Activated CD8-positive, alpha-beta T cell treated with anti-CD3 and anti-CD28 coated beads for 36 hours (primary cell): ENCODE measurements at regions of chr12 and their contacts with region 1.

Region 1: DNA sequence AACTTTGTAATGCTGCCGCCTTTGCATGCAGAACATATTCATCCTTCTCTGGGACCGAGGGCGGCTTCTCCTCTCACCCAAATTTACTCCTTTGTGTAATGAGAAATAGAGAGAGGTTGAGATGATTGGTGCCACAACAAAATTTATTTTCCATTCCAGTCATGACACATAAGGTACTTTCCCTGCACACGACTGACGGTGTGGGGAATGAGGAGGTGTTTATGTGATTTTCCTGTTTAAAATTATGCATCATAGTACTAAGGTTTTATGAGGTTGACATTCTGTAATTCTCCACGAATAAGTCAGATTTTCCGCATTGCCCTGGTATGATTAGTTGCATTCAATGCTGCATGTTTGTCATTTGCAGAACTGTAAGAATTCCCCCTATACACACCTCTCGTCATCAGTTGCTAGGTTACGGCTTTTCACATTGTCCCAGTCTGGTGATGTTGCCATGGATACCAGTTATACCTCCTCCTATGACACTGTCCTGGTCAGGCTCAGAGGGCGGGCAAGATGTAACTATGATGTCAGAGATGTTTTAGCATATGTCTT is 23.1 kb downstream of the BICDL1 start:
- DNase-seq: peak; percentile 92
- ATAC-seq: peak; percentile 74
- H3K4me3 Mint-ChIP-seq: peak overlapping the region; percentile 72
- H3K27ac Mint-ChIP-seq: peak overlapping the region; percentile 98
- H3K4me1 Mint-ChIP-seq: peaks cover 86% of the 10 kb centered on the region
- H3K27me3 Mint-ChIP-seq: no peaks in the 10 kb centered on the region
- CTCF ChIP-seq: no peak

Region 2: DNA sequence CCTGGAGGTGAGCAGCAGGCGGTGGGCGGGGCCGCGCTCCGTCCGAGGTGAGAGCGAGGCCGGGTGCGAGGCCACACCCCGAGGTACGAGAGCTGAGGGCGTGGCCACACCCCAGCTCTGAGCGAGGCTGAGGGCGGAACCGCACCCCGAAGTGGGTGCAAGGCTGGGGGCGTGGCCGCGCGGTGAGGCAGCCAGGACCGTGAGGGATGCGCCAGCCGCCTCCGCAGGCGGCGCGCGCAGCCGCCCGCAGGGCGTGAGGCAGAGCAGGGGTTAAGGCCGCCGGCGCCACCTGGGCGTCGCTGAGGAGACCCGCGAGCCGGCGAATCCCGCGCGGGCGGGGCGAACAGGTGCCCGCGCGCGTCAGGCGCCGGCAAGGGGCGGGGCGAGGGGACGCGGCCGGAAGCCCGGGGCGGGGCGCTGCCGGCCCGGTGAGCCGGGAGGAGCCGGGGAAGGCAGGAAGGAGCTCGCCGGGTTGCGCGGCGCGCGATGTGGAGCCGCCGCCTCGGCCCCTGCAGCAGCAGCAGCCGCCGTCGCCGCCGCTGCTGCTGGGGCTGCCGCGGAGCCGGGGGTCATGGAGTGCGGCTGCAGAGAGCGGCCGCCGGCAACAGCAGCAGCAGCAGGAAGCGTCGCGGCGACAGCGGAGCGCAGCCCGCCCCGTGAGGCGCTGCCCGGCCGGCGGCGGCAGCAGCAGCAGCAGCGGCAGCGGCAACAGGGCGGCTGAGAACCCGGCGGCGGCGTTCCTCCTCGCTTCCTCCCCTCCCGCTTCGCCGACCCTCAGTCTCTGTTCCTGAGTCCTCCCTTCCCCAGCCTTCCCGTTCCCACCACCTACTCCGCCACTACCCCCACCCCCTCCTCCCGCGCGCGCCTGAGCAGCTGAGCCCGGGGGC is 23.1 kb before region 1 on chr12 and contains the start of gene BICDL1:
- CTCF ChIA-PET with region 1: interaction called, 25 read pairs
- POLR2A ChIA-PET with region 1: interaction called, 131 read pairs
- intact Hi-C with region 1: loop called (anchors 2 kb)
- DNase-seq: peak; percentile 98
- ATAC-seq: peak; percentile 89
- H3K4me3 Mint-ChIP-seq: peak within 1 kb of the TSS; percentile 89
- H3K27ac Mint-ChIP-seq: peak within 1 kb of the TSS; percentile 90
- H3K4me1 Mint-ChIP-seq: peaks cover 40% of the 10 kb centered on the region
- H3K27me3 Mint-ChIP-seq: no peaks in the 10 kb centered on the region
- CTCF ChIP-seq: no peak
- total RNA-seq, gene BICDL1: 103 to 107 TPM

Region 3: GRCh38 chr12:119998471-119999245 is 13.5 kb before region 1 on chr12:
- CTCF ChIA-PET with region 1: interaction called, 12 read pairs
- POLR2A ChIA-PET with region 1: interaction called, 131 read pairs
- intact Hi-C with region 1: no loop called
- DNase-seq: no peak
- ATAC-seq: peak; percentile 62
- H3K4me3 Mint-ChIP-seq: no peak overlapping the region
- H3K27ac Mint-ChIP-seq: peak overlapping the region; percentile 43
- H3K4me1 Mint-ChIP-seq: peaks cover 63% of the 10 kb centered on the region
- H3K27me3 Mint-ChIP-seq: no peaks in the 10 kb centered on the region
- CTCF ChIP-seq: no peak

Region 4: DNA sequence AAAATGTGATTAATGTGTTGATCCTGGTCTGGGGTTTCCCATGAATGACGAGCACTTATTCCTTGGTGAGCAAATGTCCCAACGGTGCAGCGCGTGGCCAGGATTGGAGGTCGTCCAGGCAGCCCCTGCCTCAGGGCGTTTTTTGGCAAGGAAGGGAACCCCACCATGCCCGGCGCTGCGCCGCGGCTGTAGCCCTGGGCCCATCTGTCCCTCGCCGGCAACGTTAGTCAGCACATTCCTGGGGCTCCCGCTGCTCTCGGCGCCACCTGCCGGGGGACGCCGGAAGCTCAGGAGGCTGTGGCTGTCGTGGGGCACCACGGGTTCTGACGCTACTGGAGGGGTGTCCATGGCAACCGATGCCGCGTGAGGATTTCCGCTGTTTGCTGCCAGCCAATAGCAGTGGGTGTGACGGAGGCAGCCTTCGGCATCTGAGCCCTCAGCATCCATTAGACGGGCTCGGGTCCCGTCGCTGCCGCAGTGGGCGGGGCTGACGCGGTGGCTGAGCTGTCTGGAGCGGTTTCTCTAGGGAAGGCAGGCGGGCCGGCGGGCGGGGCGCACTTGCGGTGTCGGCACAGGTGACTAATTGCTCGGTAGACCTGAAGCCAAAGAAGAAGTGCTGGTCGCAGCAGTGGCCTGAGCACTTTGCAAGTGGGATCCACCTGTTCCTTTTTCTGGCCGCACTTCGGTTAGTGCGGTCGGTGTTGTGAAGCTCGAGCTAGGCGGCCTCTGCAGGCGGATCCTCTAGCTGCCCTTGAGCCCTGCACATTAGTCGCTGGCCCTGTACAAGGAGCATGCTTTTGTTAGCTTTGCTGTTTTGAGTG is 74.9 kb after region 1 on chr12:
- CTCF ChIA-PET with region 1: interaction called, 12 read pairs
- POLR2A ChIA-PET with region 1: interaction called, 9 read pairs
- intact Hi-C with region 1: loop called (anchors 5 kb)
- DNase-seq: peak; percentile 100
- ATAC-seq: peak; percentile 97
- H3K4me3 Mint-ChIP-seq: peak overlapping the region; percentile 64
- H3K27ac Mint-ChIP-seq: peak overlapping the region; percentile 88
- H3K4me1 Mint-ChIP-seq: peaks cover 32% of the 10 kb centered on the region
- H3K27me3 Mint-ChIP-seq: no peaks in the 10 kb centered on the region
- CTCF ChIP-seq: peak; percentile 95

Region 5: DNA sequence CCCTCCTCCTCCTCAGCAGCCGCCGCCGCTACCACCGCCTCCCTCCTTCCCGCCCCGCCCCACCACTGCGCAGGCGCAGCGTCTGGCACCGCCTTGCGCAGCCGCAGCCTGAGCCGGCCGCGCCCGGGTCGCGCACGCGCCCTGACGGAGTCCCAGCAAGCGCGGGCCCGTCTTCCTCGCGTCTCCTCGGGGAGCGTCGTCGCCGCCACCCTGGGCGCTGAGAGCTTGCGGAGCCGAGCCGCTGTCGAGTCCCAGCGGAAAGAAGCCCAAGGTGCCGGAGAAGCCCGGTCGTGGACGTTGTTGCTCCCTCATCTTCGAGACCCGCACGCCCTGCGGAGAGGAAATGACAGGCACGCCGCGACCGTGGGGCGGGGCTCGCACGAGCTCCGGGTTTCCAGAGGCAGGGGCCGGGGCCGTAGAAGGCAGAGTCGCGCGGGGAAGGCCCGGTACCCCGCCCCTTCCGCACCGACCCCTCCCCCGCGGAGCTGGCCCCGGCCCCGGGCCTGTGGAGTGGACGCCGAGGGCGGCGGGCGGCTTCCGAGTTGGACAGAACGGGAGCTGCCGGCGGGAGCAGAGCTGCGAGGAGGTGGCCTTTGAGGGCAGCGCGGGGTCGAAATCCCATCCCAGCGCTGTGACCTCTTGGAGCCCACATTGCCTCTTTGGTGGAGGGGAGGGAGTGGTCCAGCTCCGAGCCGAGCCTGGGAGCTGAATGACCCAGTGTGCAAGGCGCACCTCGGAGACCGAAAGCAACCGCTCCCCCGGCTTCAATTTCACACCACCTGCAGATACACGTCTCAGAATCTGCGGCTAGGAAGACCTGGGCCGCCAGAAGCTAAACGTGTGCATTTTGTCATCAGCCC is 104.9 kb after region 1 on chr12:
- CTCF ChIA-PET with region 1: interaction called, 5 read pairs
- POLR2A ChIA-PET with region 1: interaction called, 37 read pairs
- intact Hi-C with region 1: loop called (anchors 10 kb)
- DNase-seq: peak; percentile 96
- ATAC-seq: peak; percentile 83
- H3K4me3 Mint-ChIP-seq: peak overlapping the region; percentile 80
- H3K27ac Mint-ChIP-seq: peak overlapping the region; percentile 86
- H3K4me1 Mint-ChIP-seq: peaks cover 62% of the 10 kb centered on the region
- H3K27me3 Mint-ChIP-seq: no peaks in the 10 kb centered on the region
- CTCF ChIP-seq: no peak